AG04449 (cell line): ENCODE measurements at regions of chr12 and their contacts with region 1.

Region 1: GRCh38 chr12:54337280-54337842 is 12.4 kb downstream of the COPZ1 start:
- DNase-seq: no peak
- H3K4me3 ChIP-seq: no peak overlapping the region
- CTCF ChIP-seq: no peak

Region 2: GRCh38 chr12:54229624-54230212 is 107.6 kb before region 1 on chr12:
- CTCF ChIA-PET with region 1: interaction called, 11 read pairs
- POLR2A ChIA-PET with region 1: no interaction called
- DNase-seq: peak; percentile 91
- H3K4me3 ChIP-seq: no peak overlapping the region
- CTCF ChIP-seq: no peak

Region 3: GRCh38 chr12:54294152-54294952 is 43.0 kb before region 1 on chr12:
- CTCF ChIA-PET with region 1: interaction called, 22 read pairs
- POLR2A ChIA-PET with region 1: no interaction called
- DNase-seq: no peak
- H3K4me3 ChIP-seq: no peak overlapping the region
- CTCF ChIP-seq: peak; percentile 87

Region 4: GRCh38 chr12:54300732-54301427 is 36.5 kb before region 1 on chr12 and contains the start of gene NFE2:
- CTCF ChIA-PET with region 1: interaction called, 10 read pairs
- POLR2A ChIA-PET with region 1: interaction called, 3 read pairs
- DNase-seq: no peak
- H3K4me3 ChIP-seq: peak within 1 kb of the TSS; percentile 49
- CTCF ChIP-seq: peak; percentile 23

Region 5: DNA sequence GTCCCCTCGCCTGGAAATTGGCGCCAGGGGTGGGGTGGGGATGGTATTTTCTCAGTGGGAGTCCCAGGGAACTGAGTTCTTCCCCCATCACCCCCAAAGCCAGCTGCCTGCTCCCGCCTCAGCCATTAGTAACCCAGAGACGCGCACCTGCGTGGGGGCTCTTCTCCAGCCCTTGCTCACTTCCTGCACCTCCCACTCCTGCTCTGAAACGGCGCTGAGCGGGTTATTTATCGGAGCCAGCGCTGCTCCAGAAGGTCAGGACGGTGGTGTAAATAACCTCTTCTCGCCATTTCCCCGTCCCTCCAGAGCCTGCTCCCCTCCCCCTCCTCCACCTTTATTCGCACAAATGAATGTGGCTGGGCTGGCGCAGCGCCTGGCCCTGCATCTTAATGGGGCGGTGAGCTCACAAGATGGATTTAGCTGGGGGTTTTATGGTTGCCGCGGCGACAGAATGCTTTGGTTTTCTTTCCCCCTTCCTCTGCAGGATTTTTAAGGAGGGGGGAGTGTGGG is 14.7 kb after region 1 on chr12:
- CTCF ChIA-PET with region 1: interaction called, 74 read pairs
- POLR2A ChIA-PET with region 1: interaction called, 5 read pairs
- DNase-seq: no peak
- H3K4me3 ChIP-seq: no peak overlapping the region; the same call in 1 of the 2 replicates
- CTCF ChIP-seq: no peak